ENCODE measurements at regions of chr11 and their contacts with region 1.

Region 1: GRCh38 chr11:46238967-46239800 is 38.3 kb upstream of the CREB3L1 start:
- DNase-seq: peak; percentile 72 to 97
- H3K4me3 ChIP-seq: no peak overlapping the region
- CTCF ChIP-seq: peak in 1 of 3 donors; percentile 58
- POLR2A ChIP-seq: no peak

Region 2: GRCh38 chr11:45885274-45885920 is 353.8 kb before region 1 on chr11 and contains the start of gene MAPK8IP1:
- intact Hi-C with region 1: no loop called
- DNase-seq: no peak
- H3K4me3 ChIP-seq: no peak within 1 kb of the TSS
- CTCF ChIP-seq: no peak
- POLR2A ChIP-seq: no peak
- total RNA-seq, gene MAPK8IP1: 4.6 to 6.5 (median 5.4) TPM

Region 3: GRCh38 chr11:46017341-46017740 is 221.8 kb before region 1 on chr11:
- intact Hi-C with region 1: no loop called
- DNase-seq: no peak
- H3K4me3 ChIP-seq: no peak overlapping the region
- CTCF ChIP-seq: no peak
- POLR2A ChIP-seq: no peak

Region 4: GRCh38 chr11:46308631-46309419 is 69.6 kb after region 1 on chr11:
- intact Hi-C with region 1: loop called (anchors 5 kb)
- DNase-seq: peak; percentile 76 to 96
- H3K4me3 ChIP-seq: no peak overlapping the region
- CTCF ChIP-seq: peak in 1 of 3 donors; percentile 88
- POLR2A ChIP-seq: no peak

Measured in lower leg skin (tissue), 4 donors.